Tibial artery (tissue), 4 donors: ENCODE measurements at regions of chr6 and their contacts with region 1.

Region 1: DNA sequence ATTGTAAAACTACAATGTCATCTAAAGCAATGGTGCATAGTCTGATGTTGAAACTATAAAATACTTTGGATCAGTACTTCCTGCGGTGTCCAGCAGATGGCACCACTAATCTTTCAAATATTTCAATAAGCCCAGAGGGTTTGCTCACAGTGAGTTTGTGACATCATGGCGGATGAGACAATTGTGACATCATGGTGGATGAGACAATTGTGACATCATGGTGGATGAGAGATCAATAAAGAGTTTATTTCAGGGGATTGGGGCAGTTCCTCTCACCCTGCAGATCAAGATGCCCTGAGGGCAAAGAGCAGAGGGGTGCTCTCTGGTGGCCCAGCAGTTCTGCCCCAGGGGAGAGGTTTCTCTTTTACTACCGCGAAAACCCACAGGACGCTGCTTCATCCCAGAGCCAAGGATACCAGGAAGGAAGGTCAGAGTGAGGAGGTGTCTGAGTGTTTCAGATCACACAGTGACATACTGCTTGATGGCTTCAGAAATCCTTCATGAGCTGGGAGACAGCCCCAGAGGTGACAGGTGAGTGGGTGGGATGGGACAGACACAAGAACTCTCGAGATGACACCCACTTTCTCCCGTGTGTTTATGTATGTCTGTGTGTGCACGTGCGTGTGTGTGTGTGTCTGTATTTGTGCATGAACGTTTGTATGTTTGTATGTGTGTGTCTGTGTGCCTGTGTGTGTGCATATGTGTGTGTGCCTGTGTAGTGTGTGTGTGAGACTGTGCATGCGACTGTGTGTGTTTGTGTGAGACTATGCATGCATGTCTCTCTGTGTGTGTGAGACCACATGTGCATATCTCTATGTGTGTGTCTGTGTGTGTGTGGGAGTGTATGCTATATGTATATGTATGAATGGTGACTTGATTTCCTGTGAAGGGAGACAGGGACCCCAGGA is 7.3 kb upstream of the ULBP2 start:
- DNase-seq: peak in 1 of 2 donors; percentile 69
- H3K4me3 ChIP-seq: no peak overlapping the region
- H3K27ac ChIP-seq: no peak overlapping the region
- H3K4me1 ChIP-seq: peaks cover 0 to 11% (median 10%) of the 10 kb centered on the region in 4 donors
- H3K27me3 ChIP-seq: peaks cover 14 to 89% of the 10 kb centered on the region in 2 donors
- CTCF ChIP-seq: peak; percentile 79 to 88

Region 2: GRCh38 chr6:149963462-149964307 is 29.2 kb after region 1 on chr6 and contains the start of gene ULBP1:
- intact Hi-C with region 1: loop called (anchors 2 kb)
- DNase-seq: peak; percentile 84 to 91
- H3K4me3 ChIP-seq: peak within 1 kb of the TSS; percentile 45 to 54
- H3K27ac ChIP-seq: no peak within 1 kb of the TSS
- H3K4me1 ChIP-seq: peaks cover 0 to 28% (median 26%) of the 10 kb centered on the region in 4 donors
- H3K27me3 ChIP-seq: peaks cover 0 to 81% of the 10 kb centered on the region in 2 donors
- CTCF ChIP-seq: no peak

Region 3: DNA sequence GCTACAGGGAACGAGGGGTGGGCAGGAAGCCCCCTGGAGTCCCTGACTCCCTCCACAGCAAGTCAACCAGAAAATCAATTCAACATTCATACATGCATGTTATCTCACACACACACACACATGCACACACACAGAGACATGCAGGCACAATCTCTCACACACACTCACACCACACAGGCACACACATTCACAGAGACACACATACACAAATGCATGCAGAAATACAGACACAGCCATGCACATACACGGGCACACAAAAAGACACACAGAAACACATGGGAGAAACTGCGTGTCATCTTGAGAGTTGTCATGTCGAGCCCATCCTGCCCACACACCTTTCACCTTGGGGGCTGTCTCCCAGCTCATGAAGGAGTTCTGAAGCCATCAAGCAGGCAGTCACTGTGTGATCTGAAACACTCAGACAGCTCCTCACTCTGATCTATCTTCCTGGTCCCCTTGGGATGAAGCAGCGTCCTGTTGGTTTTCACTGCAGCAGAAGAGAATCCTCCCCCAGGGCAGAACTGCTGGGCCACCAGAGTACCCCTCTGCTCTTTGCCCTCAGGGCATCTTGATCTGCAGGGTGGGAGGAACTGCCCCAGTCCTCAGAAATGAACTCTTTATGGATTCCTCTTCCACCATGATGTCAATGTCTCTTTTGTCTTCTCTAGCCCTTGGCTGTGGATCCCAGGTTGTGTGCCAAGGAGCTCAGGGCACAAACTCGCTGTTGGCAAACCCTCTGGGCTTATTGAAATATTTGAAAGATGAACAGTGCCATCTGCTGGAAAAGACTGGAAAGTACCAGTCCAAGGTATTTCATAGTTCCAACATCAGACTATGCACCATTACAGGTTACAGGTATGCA is 82.1 kb after region 1 on chr6:
- intact Hi-C with region 1: loop called (anchors 1 kb)
- DNase-seq: peak; percentile 37 to 63
- H3K4me3 ChIP-seq: no peak overlapping the region
- H3K27ac ChIP-seq: no peak overlapping the region
- H3K4me1 ChIP-seq: peaks cover 0 to 12% (median 1%) of the 10 kb centered on the region in 4 donors
- H3K27me3 ChIP-seq: peaks cover 0 to 63% of the 10 kb centered on the region in 2 donors
- CTCF ChIP-seq: peak; percentile 57 to 74

Region 4: GRCh38 chr6:150091476-150091875 is 157.0 kb after region 1 on chr6:
- intact Hi-C with region 1: no loop called
- DNase-seq: no peak
- H3K4me3 ChIP-seq: no peak overlapping the region
- H3K27ac ChIP-seq: no peak overlapping the region
- H3K4me1 ChIP-seq: no peaks in the 10 kb centered on the region
- H3K27me3 ChIP-seq: peaks cover 0 to 14% of the 10 kb centered on the region in 2 donors
- CTCF ChIP-seq: no peak

Region 5: GRCh38 chr6:150452428-150453243 is 518.1 kb after region 1 on chr6:
- intact Hi-C with region 1: no loop called
- DNase-seq: peak in 1 of 2 donors; percentile 30
- H3K4me3 ChIP-seq: no peak overlapping the region
- H3K27ac ChIP-seq: no peak overlapping the region
- H3K4me1 ChIP-seq: no peaks in the 10 kb centered on the region
- H3K27me3 ChIP-seq: no peaks in the 10 kb centered on the region
- CTCF ChIP-seq: no peak